ENCODE measurements at regions of chr14 and their contacts with region 1.

Region 1: GRCh38 chr14:20613094-20614037 is 22.2 kb upstream of the RNASE12 start:
- DNase-seq: peak; percentile 75 to 82 (median 79)
- ATAC-seq: peak; percentile 80 to 87 (median 82)
- H3K4me3 ChIP-seq: peak overlapping the region; percentile 14 to 36 (median 29)
- H3K27ac ChIP-seq: peak overlapping the region in 2 of 3 donors; percentile 11 to 36
- H3K4me1 ChIP-seq: peaks cover 0 to 11% (median 0%) of the 10 kb centered on the region in 4 donors
- H3K27me3 ChIP-seq: no peaks in the 10 kb centered on the region
- CTCF ChIP-seq: peak; percentile 58 to 94 (median 72)
- POLR2A ChIP-seq: no peak

Region 2: GRCh38 chr14:20327005-20327869 is 286.1 kb before region 1 on chr14:
- intact Hi-C with region 1: loop called in 1 of 2 experiments (anchors 10 kb)
- DNase-seq: no peak
- ATAC-seq: peak; percentile 78 to 86 (median 80)
- H3K4me3 ChIP-seq: no peak overlapping the region
- H3K27ac ChIP-seq: peak overlapping the region in 2 of 3 donors; percentile 7 to 94
- H3K4me1 ChIP-seq: peaks cover 0 to 44% (median 14%) of the 10 kb centered on the region in 4 donors
- H3K27me3 ChIP-seq: no peaks in the 10 kb centered on the region
- CTCF ChIP-seq: peak; percentile 77 to 84 (median 78)
- POLR2A ChIP-seq: no peak

Region 3: DNA sequence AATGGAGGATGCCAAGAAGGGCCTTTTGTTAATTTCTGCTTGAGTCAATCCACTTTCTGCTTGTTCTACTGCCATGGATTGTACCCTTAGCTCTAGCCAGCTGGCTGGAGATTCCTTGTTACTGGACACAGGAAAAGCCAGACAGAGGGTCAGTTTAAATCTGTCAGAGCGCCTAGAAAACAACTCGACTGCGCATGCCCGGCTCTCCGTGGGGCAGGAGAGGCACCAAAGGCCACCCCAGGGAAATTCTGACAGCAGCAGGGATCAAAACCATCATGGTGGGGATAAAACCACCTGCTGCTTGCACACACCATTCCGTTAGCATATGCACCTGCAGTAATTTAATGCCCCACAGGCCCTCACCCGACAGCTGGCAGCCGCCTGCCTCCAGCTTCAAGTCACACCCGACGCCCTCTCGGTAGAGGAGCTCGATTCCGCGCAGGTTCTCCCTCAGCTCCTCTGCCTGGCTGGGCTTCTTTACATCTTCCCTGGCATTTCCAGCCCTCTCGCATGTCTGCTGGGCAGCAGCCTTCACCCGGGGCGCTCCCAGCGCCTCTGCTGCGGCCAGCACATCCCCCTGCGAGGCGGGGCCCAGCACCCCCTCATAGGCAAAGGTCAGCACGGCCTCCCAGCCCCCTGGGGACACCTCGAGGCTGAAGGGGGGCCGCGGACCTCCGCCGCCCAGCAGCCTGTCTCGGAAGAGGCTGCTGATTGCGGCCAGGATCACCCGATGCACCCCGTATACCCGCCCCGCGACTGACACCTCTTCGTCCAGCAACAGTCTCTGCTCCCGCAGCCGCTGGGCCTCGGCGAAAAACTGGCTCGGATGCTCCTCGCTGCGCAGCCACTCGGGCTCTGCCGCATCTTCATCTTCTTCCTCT is 178.4 kb before region 1 on chr14:
- intact Hi-C with region 1: loop called in 1 of 2 experiments (anchors 10 kb)
- DNase-seq: peak in 1 of 3 donors; percentile 33
- ATAC-seq: peak; percentile 54 to 60 (median 57)
- H3K4me3 ChIP-seq: peak overlapping the region in 2 of 3 donors; percentile 4 to 21
- H3K27ac ChIP-seq: peak overlapping the region in 1 of 3 donors; percentile 15
- H3K4me1 ChIP-seq: no peaks in the 10 kb centered on the region
- H3K27me3 ChIP-seq: no peaks in the 10 kb centered on the region
- CTCF ChIP-seq: no peak
- POLR2A ChIP-seq: no peak

Region 4: GRCh38 chr14:20530771-20531571 is 82.4 kb before region 1 on chr14:
- intact Hi-C with region 1: loop called in 1 of 2 experiments (anchors 10 kb)
- DNase-seq: peak; percentile 67 to 75 (median 70)
- ATAC-seq: peak; percentile 89 to 92 (median 91)
- H3K4me3 ChIP-seq: no peak overlapping the region
- H3K27ac ChIP-seq: no peak overlapping the region
- H3K4me1 ChIP-seq: no peaks in the 10 kb centered on the region
- H3K27me3 ChIP-seq: no peaks in the 10 kb centered on the region
- CTCF ChIP-seq: peak; percentile 55 to 84 (median 78)
- POLR2A ChIP-seq: no peak

Region 5: GRCh38 chr14:20682435-20683124 is 69.2 kb after region 1 on chr14:
- intact Hi-C with region 1: loop called in 1 of 2 experiments (anchors 10 kb)
- DNase-seq: peak; percentile 88 to 92 (median 90)
- ATAC-seq: peak; percentile 64 to 81 (median 67)
- H3K4me3 ChIP-seq: peak overlapping the region; percentile 71 to 80 (median 71)
- H3K27ac ChIP-seq: peak overlapping the region; percentile 96 to 100 (median 99)
- H3K4me1 ChIP-seq: peaks cover 0 to 21% (median 6%) of the 10 kb centered on the region in 4 donors
- H3K27me3 ChIP-seq: no peaks in the 10 kb centered on the region
- CTCF ChIP-seq: peak in 3 of 4 donors; percentile 18 to 21 (median 20)
- POLR2A ChIP-seq: peak; percentile 96

Region 6: GRCh38 chr14:20751963-20752562 is 138.7 kb after region 1 on chr14:
- intact Hi-C with region 1: no loop called
- DNase-seq: no peak
- ATAC-seq: no peak
- H3K4me3 ChIP-seq: no peak overlapping the region
- H3K27ac ChIP-seq: no peak overlapping the region
- H3K4me1 ChIP-seq: peaks cover 0 to 5% (median 0%) of the 10 kb centered on the region in 4 donors
- H3K27me3 ChIP-seq: no peaks in the 10 kb centered on the region
- CTCF ChIP-seq: no peak
- POLR2A ChIP-seq: no peak